Activated T-helper 1 cell treated with anti-CD3 and anti-CD28 coated beads, Interleukin-12 subunit alpha, Interleukin-12 subunit beta, Interleukin-2, Interleukin-4 antibody, amounts not matched to agents 30 ng/mL and 10 ng/mL and 1 ng/mL, durations not matched to agents 14 hours and 24 hours and 36 hours (primary cell): ENCODE measurements at regions of chr11 and their contacts with region 1.

Region 1: DNA sequence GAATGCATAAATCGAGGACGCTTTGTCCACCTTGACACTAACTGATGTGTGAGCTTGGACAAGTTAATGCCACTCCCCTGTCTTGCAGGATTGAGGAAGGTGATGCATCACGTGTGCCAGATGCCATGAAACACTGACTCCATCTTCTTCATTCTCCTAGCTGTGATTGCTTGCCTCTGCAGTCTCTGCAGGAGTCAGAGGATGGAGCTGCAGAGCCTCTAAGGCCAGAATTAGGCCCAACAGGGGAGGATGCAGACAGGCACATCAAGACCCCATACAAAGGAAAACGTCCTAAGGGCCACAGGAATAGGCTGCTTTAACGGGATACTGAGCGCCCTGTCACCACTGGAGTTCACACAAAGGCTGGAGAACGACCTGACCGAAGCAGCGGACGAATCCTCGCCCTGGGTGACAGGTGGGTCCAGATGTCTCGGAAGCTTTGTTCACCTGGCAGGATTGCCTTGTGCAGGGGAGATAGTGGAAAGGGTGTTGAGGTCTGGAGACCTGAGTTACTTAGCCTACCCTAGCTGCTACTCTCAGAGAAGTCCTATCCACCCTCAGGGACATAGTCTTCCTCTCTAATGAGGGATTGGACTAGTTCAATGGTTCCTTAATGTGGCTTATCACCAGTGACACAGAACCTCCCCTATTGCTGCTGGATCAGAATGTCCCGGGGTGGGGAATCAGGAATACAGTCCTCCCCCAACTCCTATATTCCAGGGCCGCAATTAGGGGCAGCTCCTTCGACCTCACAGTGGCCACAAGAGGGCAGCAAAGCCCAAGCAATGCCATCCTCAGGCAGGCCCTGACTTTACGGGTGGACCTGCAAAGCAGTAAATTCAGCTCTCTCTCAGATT is 32.4 kb downstream of the DBX1 start:
- DNase-seq: peak; percentile 43
- H3K4me3 Mint-ChIP-seq: no peak overlapping the region
- H3K27ac Mint-ChIP-seq: no peak overlapping the region
- H3K4me1 Mint-ChIP-seq: peaks cover 14% of the 10 kb centered on the region
- H3K27me3 Mint-ChIP-seq: peaks cover 20% of the 10 kb centered on the region

Region 2: DNA sequence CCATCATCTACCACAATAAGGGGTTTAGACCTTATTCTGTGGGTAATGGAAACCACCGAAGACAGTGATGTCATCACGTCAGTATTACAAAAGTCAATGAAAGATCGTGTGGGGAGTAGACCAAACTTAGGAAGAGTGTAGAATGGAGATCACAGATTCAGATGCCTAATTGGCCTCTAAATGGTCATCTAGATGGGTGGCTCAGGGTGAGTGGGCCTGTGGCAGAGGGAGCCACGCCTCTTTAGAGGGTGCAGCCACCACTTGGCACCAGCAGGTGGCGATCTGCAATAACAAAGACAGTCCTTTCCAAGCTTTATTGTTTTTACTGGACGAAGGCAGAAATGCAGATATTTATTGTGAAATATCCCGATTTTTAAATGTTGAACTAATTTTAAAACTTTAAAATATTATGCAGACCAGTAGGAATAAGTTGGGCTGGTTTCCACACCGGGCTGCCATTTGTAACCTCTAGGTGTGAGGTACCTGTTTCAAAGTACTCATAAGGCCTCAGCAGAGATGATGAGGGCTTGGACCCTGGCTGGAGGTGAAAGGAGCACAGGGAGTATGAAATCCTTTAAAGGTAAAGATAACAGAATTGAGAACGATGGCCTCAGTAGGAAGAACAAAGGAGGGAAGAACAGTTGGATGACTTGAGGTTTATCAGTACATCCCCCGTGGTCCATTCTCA is 189.6 kb before region 1 on chr11:
- intact Hi-C with region 1: loop called (anchors 5 kb)
- DNase-seq: no peak
- H3K4me3 Mint-ChIP-seq: no peak overlapping the region
- H3K27ac Mint-ChIP-seq: no peak overlapping the region
- H3K4me1 Mint-ChIP-seq: no peaks in the 10 kb centered on the region
- H3K27me3 Mint-ChIP-seq: peaks cover 4% of the 10 kb centered on the region

Region 3: DNA sequence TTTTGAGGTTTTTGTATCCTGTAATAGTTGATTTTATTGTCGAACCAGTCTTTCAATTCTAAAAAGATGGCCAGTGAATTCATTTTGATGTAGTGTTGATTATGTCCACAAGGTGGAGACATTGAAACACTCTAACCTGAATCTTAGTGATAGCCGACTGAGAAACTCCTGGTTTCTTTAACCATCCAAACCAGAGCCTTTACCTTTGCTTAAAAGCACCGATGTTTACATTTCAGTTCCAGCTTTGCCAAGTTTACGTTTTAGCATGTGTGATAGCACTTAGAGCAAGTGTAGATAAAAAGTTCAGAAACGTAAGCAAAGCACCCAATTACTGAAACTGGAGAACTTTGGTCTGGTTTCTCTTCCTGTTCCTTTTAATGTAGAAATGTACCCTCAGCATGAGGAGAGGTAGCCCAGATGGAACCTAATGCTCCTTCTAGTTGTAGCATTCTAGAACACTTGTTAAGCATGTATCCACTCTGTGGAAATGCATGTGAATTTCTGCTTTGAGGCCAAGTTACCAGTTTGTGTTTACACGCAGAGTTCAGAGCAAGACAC is 176.3 kb before region 1 on chr11:
- intact Hi-C with region 1: loop called (anchors 1 kb)
- DNase-seq: no peak
- H3K4me3 Mint-ChIP-seq: peak overlapping the region; percentile 53
- H3K27ac Mint-ChIP-seq: no peak overlapping the region
- H3K4me1 Mint-ChIP-seq: peaks cover 6% of the 10 kb centered on the region
- H3K27me3 Mint-ChIP-seq: peaks cover 14% of the 10 kb centered on the region

Region 4: DNA sequence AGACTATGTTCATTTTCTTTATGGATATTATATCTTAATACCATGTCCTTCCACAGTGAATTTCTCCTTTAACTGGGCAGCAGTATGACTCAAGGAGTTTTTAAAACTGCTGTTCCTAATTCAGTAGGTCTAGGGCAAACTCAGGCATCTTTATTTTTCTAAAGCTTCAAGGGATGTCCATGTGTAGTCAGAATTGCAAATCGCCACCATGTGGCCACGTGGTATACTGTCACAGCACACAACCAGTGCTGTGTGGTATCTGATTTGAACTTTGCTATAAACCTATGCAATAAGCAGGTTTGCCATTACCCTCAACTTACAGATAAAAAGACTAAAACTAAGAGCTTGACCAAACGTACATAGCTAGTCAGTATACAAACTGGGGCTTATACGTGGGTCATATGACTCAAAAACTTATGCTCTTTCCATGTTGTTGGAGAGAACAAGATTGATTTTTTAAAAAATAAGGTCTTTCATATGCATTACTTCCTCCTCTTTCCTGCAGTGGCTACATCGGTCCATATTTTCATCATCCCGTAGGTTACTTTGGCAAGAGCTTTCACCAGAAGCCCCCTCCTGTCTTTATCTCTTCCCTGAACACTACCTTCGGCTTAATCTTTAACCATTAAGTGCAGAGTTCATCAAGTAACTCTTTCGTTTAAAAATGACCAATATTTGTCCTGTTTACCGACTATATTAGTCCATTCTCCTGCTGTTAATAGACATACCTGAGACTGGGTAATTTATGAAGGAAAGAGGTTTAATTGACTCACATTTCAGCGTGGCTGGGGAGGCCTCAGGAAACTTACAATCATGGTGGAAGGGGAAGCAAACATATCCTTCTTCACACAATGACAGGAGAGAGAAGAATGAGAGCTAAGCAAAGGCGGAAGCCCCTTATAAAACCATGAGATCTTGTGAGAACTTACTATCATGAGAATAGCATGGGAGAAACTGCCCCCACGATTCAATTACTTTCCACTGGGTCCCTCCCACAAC is 227.6 kb after region 1 on chr11:
- intact Hi-C with region 1: loop called (anchors 1 kb)
- DNase-seq: no peak
- H3K4me3 Mint-ChIP-seq: no peak overlapping the region
- H3K27ac Mint-ChIP-seq: no peak overlapping the region
- H3K4me1 Mint-ChIP-seq: peaks cover 15% of the 10 kb centered on the region
- H3K27me3 Mint-ChIP-seq: peaks cover 16% of the 10 kb centered on the region

Region 5: GRCh38 chr11:20609727-20610707 is 482.1 kb after region 1 on chr11:
- intact Hi-C with region 1: loop called (anchors 1 kb)
- DNase-seq: peak; percentile 48
- H3K4me3 Mint-ChIP-seq: peak overlapping the region; percentile 66
- H3K27ac Mint-ChIP-seq: no peak overlapping the region
- H3K4me1 Mint-ChIP-seq: peaks cover 9% of the 10 kb centered on the region
- H3K27me3 Mint-ChIP-seq: peaks cover 64% of the 10 kb centered on the region

Region 6: GRCh38 chr11:20671856-20672546 is 544.1 kb after region 1 on chr11:
- intact Hi-C with region 1: loop called (anchors 1 kb)
- DNase-seq: no peak
- H3K4me3 Mint-ChIP-seq: no peak overlapping the region
- H3K27ac Mint-ChIP-seq: no peak overlapping the region
- H3K4me1 Mint-ChIP-seq: no peaks in the 10 kb centered on the region
- H3K27me3 Mint-ChIP-seq: peaks cover 53% of the 10 kb centered on the region

Region 7: DNA sequence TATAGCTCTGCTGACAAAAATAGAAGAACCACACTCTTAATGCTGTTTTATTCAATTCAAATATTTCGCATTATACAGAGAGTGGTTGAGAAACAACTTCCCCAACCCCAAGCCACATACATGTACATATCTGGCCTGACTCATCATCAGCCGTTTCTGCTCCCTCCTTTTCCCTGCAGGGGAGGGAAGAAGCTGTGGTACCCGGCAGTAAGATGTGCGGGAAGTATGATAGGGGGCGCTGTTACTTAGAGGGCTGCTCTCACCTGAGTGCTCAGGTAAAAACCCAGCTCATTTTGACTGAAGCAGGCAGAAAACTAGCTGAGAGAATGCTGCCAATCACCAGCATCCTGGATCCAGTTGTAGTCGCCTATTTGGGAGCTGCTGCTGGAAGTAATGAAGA is 627.0 kb after region 1 on chr11:
- intact Hi-C with region 1: no loop called
- DNase-seq: no peak
- H3K4me3 Mint-ChIP-seq: no peak overlapping the region
- H3K27ac Mint-ChIP-seq: no peak overlapping the region
- H3K4me1 Mint-ChIP-seq: no peaks in the 10 kb centered on the region
- H3K27me3 Mint-ChIP-seq: no peaks in the 10 kb centered on the region